Natural killer cell (primary cell): ENCODE measurements at regions of chr16 and their contacts with region 1.

Region 1: DNA sequence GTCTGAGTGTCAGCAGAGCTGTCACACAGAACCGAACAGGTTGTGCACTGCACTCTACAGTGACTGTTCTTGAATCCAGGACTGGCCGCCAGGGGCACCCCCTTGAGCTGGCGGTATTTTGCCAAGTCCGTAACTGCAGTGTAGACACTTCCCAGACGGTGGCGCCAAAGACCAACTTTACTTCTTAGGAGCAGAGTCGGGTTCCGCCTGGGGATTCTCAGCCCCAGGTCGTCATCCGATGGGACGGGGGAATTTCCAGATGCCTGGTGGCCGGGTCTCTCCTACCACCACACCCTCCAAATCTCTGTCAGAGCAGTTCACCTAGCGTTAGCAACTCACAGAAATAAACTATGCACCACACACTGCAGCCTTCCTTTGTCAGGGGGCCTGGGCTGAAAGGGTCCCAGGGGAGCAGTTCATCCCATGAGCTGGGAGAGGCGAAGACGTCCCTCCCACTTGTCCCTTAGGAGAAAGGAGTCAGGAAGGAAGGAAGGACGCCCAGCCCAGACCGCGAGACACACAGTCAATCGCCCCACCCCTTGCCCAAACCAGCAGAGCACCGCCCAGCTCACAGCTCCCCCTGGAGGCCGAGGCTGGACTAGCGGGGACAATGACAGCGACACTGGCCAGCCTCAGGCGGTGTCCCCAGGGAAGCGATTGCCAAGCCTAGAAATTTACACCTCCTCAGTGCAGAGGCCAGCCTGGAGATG is 7.4 kb upstream of the RIPOR1 start:
- DNase-seq: peak; percentile 97 to 99
- ATAC-seq: peak; percentile 90 to 97 (median 91)
- H3K4me3 ChIP-seq: peak overlapping the region; percentile 50
- H3K4me3 Mint-ChIP-seq: peak overlapping the region; percentile 93
- H3K27ac ChIP-seq: peak overlapping the region; percentile 95
- H3K27ac Mint-ChIP-seq: peak overlapping the region; percentile 99
- H3K4me1 ChIP-seq: peaks cover 34% of the 10 kb centered on the region
- H3K4me1 Mint-ChIP-seq: peaks cover 21 to 31% of the 10 kb centered on the region in 2 donors
- H3K27me3 ChIP-seq: no peaks in the 10 kb centered on the region
- H3K27me3 Mint-ChIP-seq: no peaks in the 10 kb centered on the region
- CTCF ChIP-seq: peak; percentile 98

Region 2: GRCh38 chr16:67537636-67538591 is 16.7 kb after region 1 on chr16:
- intact Hi-C with region 1: loop called (anchors 2 kb)
- DNase-seq: peak; percentile 74 to 86
- ATAC-seq: peak; percentile 66 to 83 (median 74)
- H3K4me3 ChIP-seq: peak overlapping the region; percentile 87
- H3K4me3 Mint-ChIP-seq: peak overlapping the region; percentile 91
- H3K27ac ChIP-seq: peak overlapping the region; percentile 89
- H3K27ac Mint-ChIP-seq: peak overlapping the region; percentile 89 to 94
- H3K4me1 ChIP-seq: peaks cover 41% of the 10 kb centered on the region
- H3K4me1 Mint-ChIP-seq: peaks cover 37 to 78% of the 10 kb centered on the region in 2 donors
- H3K27me3 ChIP-seq: no peaks in the 10 kb centered on the region
- H3K27me3 Mint-ChIP-seq: no peaks in the 10 kb centered on the region
- CTCF ChIP-seq: no peak

Region 3: DNA sequence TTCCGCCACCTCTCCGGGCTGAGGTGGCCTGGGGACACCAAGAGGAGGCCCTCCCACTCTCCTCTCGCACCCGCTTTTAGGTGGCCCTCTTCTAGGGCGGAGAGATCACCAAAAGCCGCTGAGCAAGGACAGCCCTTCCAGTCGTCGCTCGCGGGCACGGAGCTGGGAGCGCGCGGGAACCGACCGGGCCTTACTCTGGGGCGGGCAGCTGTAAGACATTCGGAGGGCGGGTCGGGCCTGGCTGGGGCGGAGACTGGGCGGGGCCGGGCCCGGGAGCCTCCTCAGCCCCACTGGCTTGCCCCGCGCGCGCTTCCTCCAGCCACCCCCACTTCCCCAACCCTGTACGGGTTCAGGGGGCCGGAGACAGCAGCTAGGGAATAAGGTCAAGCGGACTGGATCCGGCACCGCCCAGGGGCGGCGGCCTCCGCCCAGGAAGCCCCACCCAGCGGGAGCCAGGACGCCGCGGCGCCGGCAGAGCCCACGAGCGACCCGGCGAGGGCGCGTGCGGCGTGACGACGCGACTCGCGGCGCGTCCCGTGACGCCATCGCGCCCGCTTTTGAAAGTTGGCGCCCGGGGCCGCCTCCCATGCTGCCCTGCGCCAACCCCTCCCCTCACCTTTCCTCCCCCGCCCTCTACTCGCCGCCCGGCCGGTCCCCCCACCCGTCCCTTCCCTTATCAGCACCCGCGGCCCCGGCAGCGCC is 40.7 kb after region 1 on chr16:
- intact Hi-C with region 1: loop called (anchors 1 kb)
- DNase-seq: peak; percentile 93 to 98
- ATAC-seq: peak; percentile 75 to 90 (median 77)
- H3K4me3 ChIP-seq: peak overlapping the region; percentile 71
- H3K4me3 Mint-ChIP-seq: peak overlapping the region; percentile 95
- H3K27ac ChIP-seq: peak overlapping the region; percentile 87
- H3K27ac Mint-ChIP-seq: peak overlapping the region; percentile 93 to 95
- H3K4me1 ChIP-seq: peaks cover 23% of the 10 kb centered on the region
- H3K4me1 Mint-ChIP-seq: peaks cover 24 to 31% of the 10 kb centered on the region in 2 donors
- H3K27me3 ChIP-seq: no peaks in the 10 kb centered on the region
- H3K27me3 Mint-ChIP-seq: no peaks in the 10 kb centered on the region
- CTCF ChIP-seq: no peak

Region 4: GRCh38 chr16:67806428-67807147 is 285.3 kb after region 1 on chr16 and contains the starts of genes RANBP10 and TSNAXIP1:
- intact Hi-C with region 1: loop called (anchors 10 kb)
- DNase-seq: peak; percentile 91 to 99
- ATAC-seq: peak; percentile 90 to 98 (median 91)
- H3K4me3 ChIP-seq: peak within 1 kb of the TSS; percentile 78
- H3K4me3 Mint-ChIP-seq: peak within 1 kb of the TSS; percentile 92
- H3K27ac ChIP-seq: peak within 1 kb of the TSS; percentile 62
- H3K27ac Mint-ChIP-seq: peak within 1 kb of the TSS; percentile 87 to 92
- H3K4me1 ChIP-seq: peaks cover 27% of the 10 kb centered on the region
- H3K4me1 Mint-ChIP-seq: peaks cover 18 to 31% of the 10 kb centered on the region in 2 donors
- H3K27me3 ChIP-seq: no peaks in the 10 kb centered on the region
- H3K27me3 Mint-ChIP-seq: no peaks in the 10 kb centered on the region
- CTCF ChIP-seq: no peak
- total RNA-seq, gene RANBP10: 20.9 to 25.8 (median 24.5) TPM
- total RNA-seq, gene TSNAXIP1: 0.15 to 0.68 TPM in 2 of 3 donors, not detected in the other